Motor neuron (in vitro differentiated cells): ENCODE measurements at regions of chr3 and their contacts with region 1.

Region 1: GRCh38 chr3:40179016-40179415 is 130.5 kb upstream of the EIF1B start:
- ATAC-seq: peak; percentile 56 to 88 (median 78)
- H3K4me3 ChIP-seq: no peak overlapping the region
- H3K27ac ChIP-seq: no peak overlapping the region
- H3K4me1 ChIP-seq: peaks cover 2 to 3% of the 10 kb centered on the region in 2 donors

Region 2: DNA sequence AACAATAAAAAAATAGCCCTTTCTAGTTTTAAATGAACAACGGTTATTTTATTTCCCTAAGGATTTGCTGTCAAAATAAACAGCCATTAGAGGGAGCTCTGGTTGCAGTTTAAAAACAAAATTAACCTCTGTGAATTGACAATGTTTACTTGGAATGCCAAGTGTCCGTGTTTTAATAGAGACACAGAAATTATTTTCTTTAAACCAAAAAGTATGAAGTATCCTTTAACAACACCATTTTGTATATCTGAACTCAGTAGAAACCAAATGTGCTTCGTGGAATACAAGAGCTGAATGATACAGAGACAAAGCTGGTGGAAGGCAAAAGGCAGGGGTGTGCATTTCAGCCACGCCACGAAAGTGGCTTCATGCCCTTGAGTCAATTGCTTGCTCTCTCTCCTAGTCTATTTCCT is 637.1 kb before region 1 on chr3:
- in situ Hi-C with region 1: loop called in 1 of 9 experiments (anchors 25 kb)
- ATAC-seq: peak in 2 of 8 experiments; percentile 29 to 52
- H3K4me3 ChIP-seq: no peak overlapping the region
- H3K27ac ChIP-seq: no peak overlapping the region
- H3K4me1 ChIP-seq: no peaks in the 10 kb centered on the region

Region 3: GRCh38 chr3:39707314-39707909 is 471.6 kb before region 1 on chr3:
- in situ Hi-C with region 1: loop called in 3 of 9 experiments (anchors 25 kb)
- ATAC-seq: peak in 3 of 8 experiments; percentile 35 to 57 (median 38)
- H3K4me3 ChIP-seq: no peak overlapping the region
- H3K27ac ChIP-seq: no peak overlapping the region
- H3K4me1 ChIP-seq: no peaks in the 10 kb centered on the region

Region 4: GRCh38 chr3:40309418-40309924 is 130.5 kb after region 1 on chr3 and contains the start of gene EIF1B:
- in situ Hi-C with region 1: loop called in 3 of 9 experiments (anchors 25 kb)
- ATAC-seq: peak; percentile 87 to 96 (median 94)
- H3K4me3 ChIP-seq: peak within 1 kb of the TSS; percentile 77 to 96 (median 91)
- H3K27ac ChIP-seq: peak within 1 kb of the TSS; percentile 96 to 97
- H3K4me1 ChIP-seq: peaks cover 6 to 10% of the 10 kb centered on the region in 2 donors
- total RNA-seq, gene EIF1B: 25.1 to 150 (median 63.5) TPM

Region 5: GRCh38 chr3:40432793-40433192 is 253.8 kb after region 1 on chr3:
- in situ Hi-C with region 1: loop called in 1 of 9 experiments (anchors 25 kb)
- ATAC-seq: no peak
- H3K4me3 ChIP-seq: no peak overlapping the region
- H3K27ac ChIP-seq: no peak overlapping the region
- H3K4me1 ChIP-seq: no peaks in the 10 kb centered on the region